IMR-90 (cell line): ENCODE measurements at regions of chr1 and their contacts with region 1.

Region 1: GRCh38 chr1:174217787-174218574 is 58.7 kb downstream of the RABGAP1L start:
- DNase-seq: peak; percentile 54
- ATAC-seq: peak; percentile 85
- H3K4me3 ChIP-seq: no peak overlapping the region
- H3K27ac ChIP-seq: no peak overlapping the region
- H3K4me1 ChIP-seq: no peaks in the 10 kb centered on the region
- H3K27me3 ChIP-seq: no peaks in the 10 kb centered on the region
- CTCF ChIP-seq: peak; percentile 77
- POLR2A ChIP-seq: no peak
- RAD21 ChIP-seq: peak; percentile 84

Region 2: DNA sequence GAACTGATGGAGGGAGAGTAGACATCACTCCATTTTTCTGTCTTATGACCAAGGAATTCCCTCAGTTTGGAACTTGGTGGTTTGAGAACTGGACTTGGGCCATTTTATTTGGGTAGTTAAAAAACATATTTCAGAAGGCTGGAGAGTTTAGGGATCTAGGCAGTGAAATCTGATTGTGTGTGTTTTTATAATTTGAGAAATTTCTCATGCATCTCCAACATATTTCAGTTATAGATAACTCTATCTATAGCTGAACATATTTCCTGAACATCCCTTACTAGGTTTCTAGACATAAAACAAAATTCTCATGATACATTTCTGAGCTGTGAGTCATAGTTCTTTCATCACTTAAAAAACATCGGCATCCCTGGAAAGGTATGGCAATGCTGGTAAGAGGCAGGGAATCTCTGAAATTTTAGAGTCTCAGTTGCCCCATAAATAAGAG is 1456.4 kb before region 1 on chr1:
- CTCF ChIA-PET with region 1: no interaction called
- POLR2A ChIA-PET with region 1: no interaction called
- dilution Hi-C with region 1: no loop called
- in situ Hi-C with region 1: loop called (anchors 25 kb)
- intact Hi-C with region 1: no loop called
- DNase-seq: peak; percentile 50
- ATAC-seq: peak; percentile 46; the same call in 1 of the 2 replicates
- H3K4me3 ChIP-seq: no peak overlapping the region
- H3K27ac ChIP-seq: no peak overlapping the region
- H3K4me1 ChIP-seq: peaks cover 2% of the 10 kb centered on the region; the same call in 1 of the 2 replicates
- H3K27me3 ChIP-seq: peaks cover 3% of the 10 kb centered on the region; the same call in 1 of the 2 replicates
- CTCF ChIP-seq: no peak
- POLR2A ChIP-seq: no peak
- RAD21 ChIP-seq: no peak

Region 3: DNA sequence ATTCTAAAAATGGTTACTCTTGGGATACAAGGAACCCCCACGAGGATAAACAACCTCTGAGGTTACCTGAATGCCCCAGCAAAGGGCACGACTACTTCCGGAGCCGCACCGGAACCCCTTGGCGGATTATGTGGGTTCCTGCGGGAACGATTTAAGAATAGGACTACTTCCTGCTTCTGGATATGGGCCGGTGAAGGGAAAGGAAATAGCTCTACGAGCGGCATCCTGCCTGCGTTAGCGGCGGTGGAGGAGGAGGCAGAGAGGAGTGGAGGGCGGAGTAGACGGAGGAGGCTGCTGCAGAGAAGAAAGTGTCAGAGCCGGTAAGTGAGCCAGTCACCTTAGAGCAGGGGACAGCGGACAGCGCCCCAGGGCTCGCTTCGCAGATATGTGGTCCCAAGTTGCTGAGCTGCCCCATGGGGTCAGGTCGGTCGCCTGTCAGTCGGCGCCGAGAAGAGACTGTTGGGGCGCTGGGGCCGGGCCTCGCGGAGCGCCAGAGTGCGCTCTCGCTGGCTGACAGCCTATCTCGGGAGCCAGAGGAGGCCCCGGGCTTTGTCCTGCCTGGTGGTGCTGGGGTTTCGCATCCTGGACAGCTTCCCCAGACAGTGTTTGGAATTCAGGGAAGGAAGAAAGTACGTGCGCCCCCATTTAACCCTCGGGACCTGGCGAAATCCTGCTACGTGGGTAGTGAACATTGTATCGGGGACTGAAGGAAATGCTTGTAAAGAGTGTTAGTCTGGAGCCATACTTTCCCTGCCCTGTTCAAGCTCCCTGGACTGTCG is 503.0 kb before region 1 on chr1 and contains the start of gene KLHL20:
- CTCF ChIA-PET with region 1: no interaction called
- POLR2A ChIA-PET with region 1: no interaction called
- dilution Hi-C with region 1: no loop called
- in situ Hi-C with region 1: no loop called
- intact Hi-C with region 1: loop called (anchors 5 kb)
- DNase-seq: peak; percentile 90
- ATAC-seq: peak; percentile 97
- H3K4me3 ChIP-seq: peak within 1 kb of the TSS; percentile 76
- H3K27ac ChIP-seq: peak within 1 kb of the TSS; percentile 85
- H3K4me1 ChIP-seq: no peaks in the 10 kb centered on the region
- H3K27me3 ChIP-seq: peaks cover 4% of the 10 kb centered on the region; the same call in 1 of the 2 replicates
- CTCF ChIP-seq: 0 out of 2 replicates have a peak, but pooled peaks have one; percentile 6
- POLR2A ChIP-seq: peak; percentile 65
- RAD21 ChIP-seq: no peak
- total RNA-seq, gene KLHL20: 23.3 and 25.8 TPM in 2 replicates

Region 4: GRCh38 chr1:174005032-174005431 is 212.9 kb before region 1 on chr1:
- CTCF ChIA-PET with region 1: no interaction called
- POLR2A ChIA-PET with region 1: no interaction called
- dilution Hi-C with region 1: no loop called
- in situ Hi-C with region 1: no loop called
- intact Hi-C with region 1: loop called (anchors 10 kb)
- DNase-seq: peak; percentile 34
- ATAC-seq: peak; percentile 47
- H3K4me3 ChIP-seq: no peak overlapping the region
- H3K27ac ChIP-seq: no peak overlapping the region
- H3K4me1 ChIP-seq: peaks cover 17% of the 10 kb centered on the region
- H3K27me3 ChIP-seq: no peaks in the 10 kb centered on the region
- CTCF ChIP-seq: no peak
- POLR2A ChIP-seq: no peak
- RAD21 ChIP-seq: no peak

Region 5: DNA sequence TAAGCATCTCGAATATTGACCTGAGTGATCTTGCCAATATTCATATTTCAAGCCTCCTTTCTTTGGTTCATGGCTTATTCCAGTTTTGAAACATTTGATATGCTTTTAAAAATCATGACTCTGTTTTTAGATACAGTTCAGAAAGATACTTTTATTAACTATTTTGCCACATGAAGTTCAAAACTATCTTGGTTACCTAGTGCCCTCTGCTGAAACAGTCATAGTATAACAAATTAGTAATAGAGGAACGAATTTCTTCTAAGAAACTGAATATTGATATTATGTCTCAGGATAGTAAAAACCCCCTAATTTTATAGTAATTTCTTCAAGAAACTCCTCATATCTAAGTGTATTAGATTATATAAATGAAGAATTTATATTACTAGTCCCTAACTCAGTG is 143.2 kb before region 1 on chr1:
- CTCF ChIA-PET with region 1: no interaction called
- POLR2A ChIA-PET with region 1: no interaction called
- dilution Hi-C with region 1: no loop called
- in situ Hi-C with region 1: no loop called
- intact Hi-C with region 1: loop called (anchors 1 kb)
- DNase-seq: peak; percentile 55
- ATAC-seq: peak; percentile 76
- H3K4me3 ChIP-seq: no peak overlapping the region
- H3K27ac ChIP-seq: no peak overlapping the region
- H3K4me1 ChIP-seq: no peaks in the 10 kb centered on the region
- H3K27me3 ChIP-seq: no peaks in the 10 kb centered on the region
- CTCF ChIP-seq: peak; percentile 64
- POLR2A ChIP-seq: no peak
- RAD21 ChIP-seq: peak; percentile 72

Region 6: DNA sequence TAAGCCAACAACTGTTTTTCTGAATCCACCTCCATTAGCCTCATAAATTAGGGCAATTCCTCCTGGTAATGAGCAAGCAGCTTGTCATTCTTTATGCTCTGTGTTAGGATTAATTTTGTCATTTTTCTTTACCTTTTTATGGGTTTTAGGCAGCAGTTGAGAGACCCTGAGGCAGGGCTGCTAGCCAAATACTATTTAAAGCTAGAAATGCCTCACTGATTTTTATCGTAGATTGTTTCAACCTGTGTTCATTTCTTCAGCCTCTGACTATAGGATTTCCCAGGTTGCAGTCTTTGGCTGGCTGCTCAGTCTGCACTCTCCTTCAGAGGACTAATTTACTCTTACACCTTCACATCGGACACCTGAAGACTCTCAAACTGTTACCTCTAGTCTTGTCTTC is 120.6 kb before region 1 on chr1:
- CTCF ChIA-PET with region 1: no interaction called
- POLR2A ChIA-PET with region 1: no interaction called
- dilution Hi-C with region 1: no loop called
- in situ Hi-C with region 1: no loop called
- intact Hi-C with region 1: loop called (anchors 5 kb)
- DNase-seq: no peak
- ATAC-seq: no peak
- H3K4me3 ChIP-seq: no peak overlapping the region
- H3K27ac ChIP-seq: no peak overlapping the region
- H3K4me1 ChIP-seq: no peaks in the 10 kb centered on the region
- H3K27me3 ChIP-seq: peaks cover 9% of the 10 kb centered on the region
- CTCF ChIP-seq: no peak
- POLR2A ChIP-seq: no peak
- RAD21 ChIP-seq: no peak